ENCODE measurements at regions of chr5 and their contacts with region 1.

Region 1: GRCh38 chr5:14650052-14650451 is 14.5 kb upstream of the OTULIN start:
- DNase-seq: no peak
- H3K4me3 Mint-ChIP-seq: no peak overlapping the region
- H3K27ac Mint-ChIP-seq: no peak overlapping the region
- H3K4me1 Mint-ChIP-seq: peaks cover 2% of the 10 kb centered on the region
- H3K27me3 Mint-ChIP-seq: peaks cover 43% of the 10 kb centered on the region
- CTCF ChIP-seq: no peak

Region 2: GRCh38 chr5:14351845-14352712 is 298.0 kb before region 1 on chr5:
- CTCF ChIA-PET with region 1: interaction called, 14 read pairs
- POLR2A ChIA-PET with region 1: no interaction called
- intact Hi-C with region 1: no loop called
- DNase-seq: peak; percentile 62
- H3K4me3 Mint-ChIP-seq: no peak overlapping the region
- H3K27ac Mint-ChIP-seq: no peak overlapping the region
- H3K4me1 Mint-ChIP-seq: no peaks in the 10 kb centered on the region
- H3K27me3 Mint-ChIP-seq: no peaks in the 10 kb centered on the region
- CTCF ChIP-seq: peak; percentile 87

Region 3: DNA sequence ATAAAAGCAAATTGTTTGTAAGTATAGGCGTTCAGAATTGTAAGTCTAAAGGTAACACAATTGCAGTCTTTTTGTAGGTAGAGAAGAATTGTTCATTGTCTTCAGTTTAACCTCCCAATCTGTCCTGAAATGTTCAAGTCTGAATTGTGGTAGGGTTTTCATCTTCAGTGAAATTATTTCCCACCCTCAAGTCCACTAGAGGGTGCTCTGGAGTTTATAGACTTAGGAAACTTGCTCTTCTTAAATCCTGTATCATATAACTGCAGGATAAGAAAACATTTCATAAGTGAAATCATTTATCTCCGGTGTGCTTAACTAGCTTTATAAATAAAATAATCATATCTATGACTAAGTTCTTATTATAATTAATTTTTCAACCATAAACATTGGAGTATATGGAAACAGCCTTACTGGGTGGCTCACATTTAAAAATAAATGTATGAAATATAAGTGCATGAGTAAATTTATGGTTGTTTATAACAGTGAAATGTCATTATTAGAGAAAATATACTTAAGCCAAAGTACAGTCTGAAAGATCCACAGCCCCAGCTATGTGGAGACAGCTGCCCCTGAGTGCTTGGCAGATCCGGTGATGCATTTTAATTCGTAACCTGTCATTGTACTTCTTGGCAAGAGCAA is 250.9 kb before region 1 on chr5:
- CTCF ChIA-PET with region 1: interaction called, 114 read pairs
- POLR2A ChIA-PET with region 1: interaction called, 3 read pairs
- intact Hi-C with region 1: loop called (anchors 1 kb)
- DNase-seq: peak; percentile 64
- H3K4me3 Mint-ChIP-seq: no peak overlapping the region
- H3K27ac Mint-ChIP-seq: no peak overlapping the region
- H3K4me1 Mint-ChIP-seq: no peaks in the 10 kb centered on the region
- H3K27me3 Mint-ChIP-seq: no peaks in the 10 kb centered on the region
- CTCF ChIP-seq: peak; percentile 57

Region 4: DNA sequence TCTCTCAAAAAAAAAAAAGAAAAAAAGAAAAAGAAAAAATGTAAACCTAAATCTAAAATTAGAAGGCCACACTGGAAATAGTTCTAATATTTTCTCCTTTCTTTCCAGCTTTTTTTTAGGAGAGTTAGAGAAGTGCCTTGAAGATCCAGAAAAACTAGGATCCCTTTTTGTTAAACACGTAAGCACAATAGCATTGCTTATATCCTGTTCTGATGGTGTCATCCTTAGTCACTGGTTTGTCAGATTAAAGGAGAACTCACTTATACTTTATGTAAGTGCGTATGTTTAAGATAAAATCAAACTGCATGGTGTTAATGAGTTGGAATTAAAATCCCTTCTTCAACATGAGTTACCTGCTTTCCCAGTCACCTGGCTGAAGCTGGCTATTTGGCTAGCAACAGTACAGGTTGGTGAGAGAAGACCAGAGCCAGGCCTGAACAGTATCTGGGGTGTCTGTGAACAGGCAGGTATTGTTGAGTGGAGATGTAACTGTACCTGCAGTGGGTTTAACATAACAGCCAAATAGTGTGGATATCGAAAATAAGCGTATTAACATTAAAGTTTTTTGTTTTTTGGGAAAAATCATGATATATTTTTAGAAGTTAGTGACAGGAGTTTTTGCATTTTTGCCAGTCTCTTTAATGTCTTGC is 173.1 kb before region 1 on chr5:
- CTCF ChIA-PET with region 1: interaction called, 25 read pairs
- POLR2A ChIA-PET with region 1: no interaction called
- intact Hi-C with region 1: no loop called
- DNase-seq: peak; percentile 6
- H3K4me3 Mint-ChIP-seq: no peak overlapping the region
- H3K27ac Mint-ChIP-seq: peak overlapping the region; percentile 36
- H3K4me1 Mint-ChIP-seq: peaks cover 8% of the 10 kb centered on the region
- H3K27me3 Mint-ChIP-seq: no peaks in the 10 kb centered on the region
- CTCF ChIP-seq: no peak

Region 5: GRCh38 chr5:14598225-14598624 is 51.8 kb before region 1 on chr5:
- CTCF ChIA-PET with region 1: no interaction called
- POLR2A ChIA-PET with region 1: no interaction called
- intact Hi-C with region 1: no loop called
- DNase-seq: no peak
- H3K4me3 Mint-ChIP-seq: no peak overlapping the region
- H3K27ac Mint-ChIP-seq: no peak overlapping the region
- H3K4me1 Mint-ChIP-seq: no peaks in the 10 kb centered on the region
- H3K27me3 Mint-ChIP-seq: peaks cover 3% of the 10 kb centered on the region
- CTCF ChIP-seq: no peak

Region 6: DNA sequence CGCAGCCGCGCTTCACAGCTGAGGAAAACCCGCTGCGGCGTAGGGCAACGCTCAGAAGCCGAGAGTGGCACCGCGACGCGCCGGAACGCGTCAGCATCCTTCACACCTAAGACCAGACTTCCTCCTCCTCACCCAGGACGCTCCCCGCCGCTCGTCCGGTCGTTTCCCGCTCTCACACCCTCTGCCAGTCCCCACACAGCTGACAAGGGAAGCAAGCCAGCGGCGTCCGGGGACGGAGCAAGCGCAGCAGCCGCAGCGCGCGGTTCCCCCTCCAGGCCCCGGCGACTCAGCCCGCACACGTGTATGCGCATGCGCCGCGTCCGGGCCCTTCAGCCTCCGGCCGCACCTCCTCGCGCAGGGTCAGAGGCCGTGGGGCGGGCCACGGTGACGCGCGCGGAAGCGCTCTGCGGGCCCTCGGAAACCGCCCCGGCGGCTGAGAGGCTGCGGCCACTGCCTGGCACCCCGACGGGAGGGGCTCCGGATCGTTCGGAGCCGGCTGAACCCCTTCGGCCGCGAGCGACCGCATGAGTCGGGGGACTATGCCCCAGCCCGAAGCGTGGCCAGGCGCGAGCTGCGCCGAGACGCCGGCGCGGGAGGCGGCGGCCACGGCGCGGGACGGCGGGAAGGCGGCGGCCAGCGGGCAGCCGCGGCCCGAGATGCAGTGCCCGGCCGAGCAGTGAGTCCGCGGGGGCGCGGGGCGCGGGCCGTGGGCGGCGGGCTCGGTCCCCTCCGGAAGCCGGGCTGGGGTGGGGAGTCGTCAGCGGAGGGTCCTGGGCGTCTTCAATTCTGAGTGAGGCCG is 14.4 kb after region 1 on chr5 and contains the start of gene OTULIN:
- CTCF ChIA-PET with region 1: interaction called, 17 read pairs
- POLR2A ChIA-PET with region 1: interaction called, 8 read pairs
- intact Hi-C with region 1: no loop called
- DNase-seq: peak; percentile 86
- H3K4me3 Mint-ChIP-seq: peak within 1 kb of the TSS; percentile 97
- H3K27ac Mint-ChIP-seq: peak within 1 kb of the TSS; percentile 97
- H3K4me1 Mint-ChIP-seq: peaks cover 43% of the 10 kb centered on the region
- H3K27me3 Mint-ChIP-seq: no peaks in the 10 kb centered on the region
- CTCF ChIP-seq: no peak
- total RNA-seq, gene OTULIN: 27.0 and 34.6 TPM in 2 replicates

Region 7: GRCh38 chr5:14700478-14701436 is 50.7 kb after region 1 on chr5:
- CTCF ChIA-PET with region 1: no interaction called
- POLR2A ChIA-PET with region 1: no interaction called
- intact Hi-C with region 1: no loop called
- DNase-seq: no peak
- H3K4me3 Mint-ChIP-seq: no peak overlapping the region
- H3K27ac Mint-ChIP-seq: no peak overlapping the region
- H3K4me1 Mint-ChIP-seq: peaks cover 16% of the 10 kb centered on the region
- H3K27me3 Mint-ChIP-seq: no peaks in the 10 kb centered on the region
- CTCF ChIP-seq: no peak